ENCODE measurements at regions of chr1 and their contacts with region 1.

Region 1: DNA sequence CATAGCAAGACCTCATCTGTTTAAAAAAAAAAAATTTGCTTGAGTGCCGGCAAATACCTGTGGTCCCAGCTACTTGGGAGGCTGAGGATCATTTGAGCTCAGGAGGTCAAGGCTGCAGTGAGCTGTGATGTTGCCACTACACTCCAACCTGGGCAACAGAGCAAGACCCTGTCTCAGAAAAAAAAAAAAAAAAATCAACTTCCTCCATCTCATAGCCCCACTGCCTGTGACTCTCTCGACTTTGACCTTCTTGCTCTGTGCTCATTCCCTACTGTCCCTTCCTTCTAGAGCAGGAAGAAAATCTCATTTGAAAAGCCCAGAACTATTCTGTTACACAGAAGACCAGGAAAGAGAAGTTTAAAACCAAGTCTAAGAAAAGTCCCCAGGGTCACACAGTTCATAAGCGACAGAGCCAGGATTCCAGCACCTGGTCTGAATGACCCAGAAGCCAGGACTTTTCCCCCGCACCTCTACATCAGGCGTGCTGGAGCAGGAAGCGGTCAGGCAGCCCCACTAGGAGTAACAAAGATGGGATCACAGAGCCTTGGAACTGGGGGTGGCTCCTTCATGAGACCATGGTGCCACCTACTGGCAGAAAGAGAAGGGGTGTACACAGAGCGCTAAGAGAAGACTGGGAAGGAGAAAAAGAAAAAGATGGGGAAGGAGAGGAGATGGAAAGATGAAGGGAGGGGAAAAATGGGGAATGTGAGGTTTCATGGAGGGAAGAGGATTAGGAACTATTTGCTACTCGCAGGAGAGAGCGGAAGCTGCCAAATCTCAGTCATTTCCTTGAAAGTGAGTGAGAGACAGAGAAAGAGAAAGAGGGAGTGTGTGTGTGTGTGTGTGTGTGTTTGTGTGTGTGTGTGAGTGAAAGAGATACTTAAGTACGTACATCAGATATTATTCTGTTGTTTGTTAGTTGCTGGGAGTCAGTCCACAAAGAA is 3.1 kb upstream of the P3R3URF start:
- DNase-seq: peak; percentile 82 to 83
- ATAC-seq: peak; percentile 90
- H3K4me3 ChIP-seq: no peak overlapping the region
- H3K27ac ChIP-seq: no peak overlapping the region
- H3K4me1 ChIP-seq: no peaks in the 10 kb centered on the region
- H3K27me3 ChIP-seq: no peaks in the 10 kb centered on the region

Region 2: GRCh38 chr1:45913183-45913683 is 266.2 kb before region 1 on chr1:
- intact Hi-C with region 1: no loop called
- DNase-seq: peak in 1 of 2 donors; percentile 72
- ATAC-seq: peak; percentile 82
- H3K4me3 ChIP-seq: peak overlapping the region in 1 of 2 donors; percentile 54
- H3K27ac ChIP-seq: peak overlapping the region; percentile 94
- H3K4me1 ChIP-seq: no peaks in the 10 kb centered on the region
- H3K27me3 ChIP-seq: no peaks in the 10 kb centered on the region

Region 3: GRCh38 chr1:46036894-46037839 is 142.2 kb before region 1 on chr1:
- intact Hi-C with region 1: loop called (anchors 1 kb)
- DNase-seq: peak; percentile 90 to 96
- ATAC-seq: peak; percentile 89
- H3K4me3 ChIP-seq: no peak overlapping the region
- H3K27ac ChIP-seq: no peak overlapping the region
- H3K4me1 ChIP-seq: no peaks in the 10 kb centered on the region
- H3K27me3 ChIP-seq: no peaks in the 10 kb centered on the region

Region 4: DNA sequence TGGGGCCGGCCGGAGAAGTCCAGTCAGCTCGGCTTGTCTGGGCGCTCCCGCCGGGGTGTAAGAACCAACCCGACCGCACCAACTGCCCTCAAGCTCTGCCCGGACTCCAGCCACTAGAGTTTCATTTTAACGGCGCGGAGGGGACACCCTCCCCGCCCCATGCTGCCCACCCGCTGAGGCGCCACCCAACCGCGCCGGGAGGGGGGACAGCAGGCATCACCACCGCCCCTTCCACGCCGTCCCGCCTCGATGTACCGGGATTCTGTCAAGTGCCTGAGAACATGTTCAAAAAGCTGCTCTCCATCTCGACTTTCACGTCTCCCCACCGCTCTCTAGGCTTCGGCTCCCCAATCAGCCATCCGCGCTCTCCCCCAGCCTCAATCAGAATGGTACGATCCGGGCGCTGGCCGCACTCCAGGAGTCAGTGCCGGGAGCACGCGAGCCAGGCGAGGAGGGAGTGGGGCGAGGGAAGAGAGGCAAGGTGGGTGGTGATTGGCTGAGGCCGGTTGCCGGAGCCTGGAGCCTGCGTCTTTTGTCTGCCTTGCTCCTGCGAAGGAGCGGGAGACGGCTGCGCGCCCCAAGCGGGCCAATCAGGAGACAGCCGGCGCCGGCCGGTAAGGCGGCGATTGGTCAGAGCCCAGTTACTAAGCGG is 46.8 kb before region 1 on chr1 and contains the start of gene PIK3R3:
- intact Hi-C with region 1: loop called (anchors 1 to 5 kb)
- DNase-seq: peak; percentile 99
- ATAC-seq: peak; percentile 99
- H3K4me3 ChIP-seq: peak within 1 kb of the TSS; percentile 73 to 96
- H3K27ac ChIP-seq: peak within 1 kb of the TSS; percentile 62 to 94
- H3K4me1 ChIP-seq: peaks cover 2 to 6% of the 10 kb centered on the region in 2 donors
- H3K27me3 ChIP-seq: no peaks in the 10 kb centered on the region
- total RNA-seq, gene PIK3R3: 32.0 to 49.8 TPM

Region 5: GRCh38 chr1:46197964-46198811 is 18.8 kb after region 1 on chr1 and contains the start of gene POMGNT1:
- intact Hi-C with region 1: loop called in 1 of 2 experiments (anchors 2 kb)
- DNase-seq: peak; percentile 73 to 90
- ATAC-seq: peak; percentile 89
- H3K4me3 ChIP-seq: peak within 1 kb of the TSS; percentile 39 to 47
- H3K27ac ChIP-seq: peak within 1 kb of the TSS in 1 of 2 donors; percentile 37
- H3K4me1 ChIP-seq: peaks cover 0 to 7% of the 10 kb centered on the region in 2 donors
- H3K27me3 ChIP-seq: no peaks in the 10 kb centered on the region
- total RNA-seq, gene POMGNT1: 52.8 to 56.0 TPM

Region 6: GRCh38 chr1:46223472-46223943 is 44.1 kb after region 1 on chr1:
- intact Hi-C with region 1: loop called (anchors 2 kb)
- DNase-seq: peak; percentile 75 to 83
- ATAC-seq: peak; percentile 84
- H3K4me3 ChIP-seq: no peak overlapping the region
- H3K27ac ChIP-seq: peak overlapping the region in 1 of 2 donors; percentile 8
- H3K4me1 ChIP-seq: no peaks in the 10 kb centered on the region
- H3K27me3 ChIP-seq: no peaks in the 10 kb centered on the region

Region 7: GRCh38 chr1:47325530-47325929 is 1146.1 kb after region 1 on chr1:
- intact Hi-C with region 1: no loop called
- DNase-seq: no peak
- ATAC-seq: no peak
- H3K4me3 ChIP-seq: no peak overlapping the region
- H3K27ac ChIP-seq: no peak overlapping the region
- H3K4me1 ChIP-seq: no peaks in the 10 kb centered on the region
- H3K27me3 ChIP-seq: no peaks in the 10 kb centered on the region

Measured in aorta (tissue), 5 donors.